ENCODE measurements at regions of chr9 and their contacts with region 1.

Region 1: DNA sequence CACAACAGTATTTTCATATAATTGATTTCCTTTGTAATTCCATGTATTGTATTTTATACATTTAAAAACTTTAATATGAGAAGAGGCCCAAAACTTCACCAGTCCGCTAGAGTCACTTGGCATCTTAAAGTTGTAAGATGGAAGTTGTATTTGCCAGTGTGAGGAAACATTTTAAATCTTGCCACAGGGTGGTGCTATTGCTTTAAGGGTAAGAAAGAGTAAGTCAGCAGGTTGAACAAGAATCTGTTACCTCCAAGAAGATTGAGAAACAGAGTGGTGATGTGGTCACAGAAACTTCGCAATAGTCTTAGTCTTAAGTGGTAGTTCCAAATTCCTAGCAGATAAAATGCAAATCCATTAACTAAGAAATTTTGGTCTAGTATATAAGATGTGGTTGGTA is 39.8 kb upstream of the RANBP6 start:
- DNase-seq: no peak
- ATAC-seq: peak in 3 of 4 donors; percentile 63 to 89 (median 74)
- H3K4me3 ChIP-seq: no peak overlapping the region
- H3K27ac ChIP-seq: no peak overlapping the region
- H3K4me1 ChIP-seq: no peaks in the 10 kb centered on the region
- H3K27me3 ChIP-seq: no peaks in the 10 kb centered on the region
- CTCF ChIP-seq: peak; percentile 33 to 64 (median 52)
- POLR2A ChIP-seq: no peak

Region 2: DNA sequence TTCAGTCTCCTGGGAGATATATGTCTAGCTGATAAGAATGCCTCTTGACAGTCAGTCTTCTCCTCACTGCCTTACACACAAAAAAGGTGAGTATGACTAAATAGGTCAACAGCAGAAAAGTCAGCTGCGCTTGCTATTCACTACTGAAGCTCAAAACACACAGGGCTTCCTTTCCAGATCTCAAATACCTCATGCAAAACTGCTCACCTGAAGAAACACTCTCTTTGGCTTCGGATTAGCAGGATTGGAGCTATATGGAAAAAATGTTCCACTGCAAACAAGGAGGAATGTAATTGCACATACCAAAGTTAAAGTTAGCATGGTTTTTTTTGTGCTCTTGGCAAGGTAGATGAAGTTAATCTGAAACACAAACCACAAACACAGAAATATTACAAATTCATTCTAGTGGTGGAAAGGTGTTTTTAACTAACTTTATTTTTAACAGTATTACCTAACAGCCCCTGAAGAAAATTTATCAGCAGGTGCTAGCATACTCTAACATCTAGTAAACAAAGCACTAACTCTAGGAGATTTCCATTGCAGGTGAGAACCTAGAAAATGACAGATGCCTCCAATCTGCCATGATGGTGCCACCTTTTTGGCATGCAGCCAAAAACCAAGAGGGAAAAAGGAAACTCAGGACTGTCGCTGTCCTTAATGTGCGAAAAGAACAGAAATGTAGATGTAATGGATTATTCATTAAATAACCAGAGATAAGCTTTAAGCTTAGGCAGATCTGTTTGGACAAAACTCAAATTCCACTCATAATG is 254.1 kb before region 1 on chr9:
- intact Hi-C with region 1: loop called in 1 of 10 experiments (anchors 10 kb)
- DNase-seq: no peak
- ATAC-seq: no peak
- H3K4me3 ChIP-seq: no peak overlapping the region
- H3K27ac ChIP-seq: no peak overlapping the region
- H3K4me1 ChIP-seq: peaks cover 0 to 6% (median 0%) of the 10 kb centered on the region in 12 donors
- H3K27me3 ChIP-seq: no peaks in the 10 kb centered on the region
- CTCF ChIP-seq: no peak
- POLR2A ChIP-seq: no peak

Region 3: DNA sequence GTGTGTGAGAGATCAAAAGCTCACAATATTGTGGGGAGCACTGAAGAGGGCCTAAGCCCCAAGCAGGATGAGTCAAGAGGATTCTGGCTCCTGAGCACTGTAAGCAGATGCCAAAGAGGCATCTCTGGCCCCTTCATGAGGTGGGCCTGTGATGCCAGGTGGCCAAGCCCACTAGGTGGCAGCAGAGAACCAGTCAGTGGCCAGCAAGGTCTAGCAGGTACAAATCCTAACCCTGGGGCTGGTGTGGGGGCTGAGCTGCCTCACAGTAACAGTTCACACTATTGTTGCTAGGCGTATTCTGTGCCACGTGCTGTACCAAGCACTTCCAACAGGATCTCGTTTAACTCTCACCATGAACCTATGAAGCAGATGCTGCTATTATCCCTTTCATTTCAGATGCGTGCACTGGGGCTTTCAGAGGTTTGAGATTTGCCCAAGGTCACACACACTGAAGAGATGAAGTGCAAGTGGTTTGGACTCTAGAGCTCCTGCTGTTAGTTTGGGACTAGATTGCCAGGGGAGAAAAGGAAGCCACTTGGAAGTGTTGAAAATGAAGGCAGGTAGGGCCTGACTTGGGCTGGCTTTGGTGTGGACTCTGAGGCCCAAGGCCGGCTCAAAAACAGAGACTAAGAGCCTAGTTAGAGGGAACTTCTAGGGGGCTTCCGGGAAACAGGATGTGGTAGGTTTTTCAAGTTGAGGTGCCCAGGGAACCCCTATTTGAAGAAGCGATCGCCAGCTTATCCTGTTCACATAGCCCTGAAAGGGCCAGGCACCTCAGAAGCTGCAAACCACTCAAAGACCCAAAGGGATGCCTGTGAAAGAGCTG is 168.9 kb before region 1 on chr9:
- intact Hi-C with region 1: loop called (anchors 1 to 5 kb)
- DNase-seq: peak; percentile 50 to 81 (median 72)
- ATAC-seq: peak; percentile 85 to 89 (median 87)
- H3K4me3 ChIP-seq: no peak overlapping the region
- H3K27ac ChIP-seq: no peak overlapping the region
- H3K4me1 ChIP-seq: no peaks in the 10 kb centered on the region
- H3K27me3 ChIP-seq: no peaks in the 10 kb centered on the region
- CTCF ChIP-seq: peak; percentile 78 to 94 (median 87)
- POLR2A ChIP-seq: no peak

Region 4: DNA sequence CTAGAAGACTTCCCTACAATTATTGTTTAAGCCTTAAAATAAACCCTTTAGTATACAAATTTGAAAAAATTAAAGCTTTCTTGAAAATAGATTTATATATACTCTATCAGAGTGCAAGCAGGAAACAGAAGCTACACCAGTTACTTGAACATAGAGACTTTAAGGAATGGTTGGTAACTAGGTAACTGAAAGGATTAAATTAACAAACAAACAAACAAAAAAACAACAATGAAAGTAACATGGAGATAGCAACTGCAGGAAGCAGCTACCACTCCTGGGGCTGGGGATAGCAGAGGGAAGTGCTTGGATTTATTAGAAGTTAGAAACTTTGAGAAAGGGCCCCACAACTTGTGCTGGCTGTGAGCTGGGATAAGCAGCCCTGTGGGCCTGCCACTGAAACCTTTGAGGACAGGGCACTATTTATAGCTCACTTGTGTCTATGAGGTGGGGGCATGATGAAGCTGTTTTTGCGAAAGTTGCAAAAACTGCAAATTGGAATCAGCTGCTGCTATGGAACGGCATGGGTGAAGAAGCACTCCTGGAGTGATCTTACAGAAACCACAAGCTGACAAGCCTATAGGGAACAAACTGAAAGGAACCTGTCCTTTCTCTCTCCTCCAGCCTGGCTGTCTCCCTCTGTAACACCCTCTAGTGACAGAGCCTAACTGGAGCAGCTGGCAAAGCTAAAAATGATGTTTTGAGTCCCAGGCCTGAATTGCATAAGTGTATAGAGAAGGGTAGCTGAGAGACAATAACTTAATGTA is 51.5 kb after region 1 on chr9:
- intact Hi-C with region 1: loop called in 2 of 10 experiments (anchors 2 to 10 kb)
- DNase-seq: peak in 4 of 5 donors; percentile 15 to 35 (median 26)
- ATAC-seq: peak; percentile 93 to 95 (median 94)
- H3K4me3 ChIP-seq: no peak overlapping the region
- H3K27ac ChIP-seq: peak overlapping the region in 11 of 12 donors; percentile 41 to 83 (median 70)
- H3K4me1 ChIP-seq: peaks cover 0 to 16% (median 9%) of the 10 kb centered on the region in 12 donors
- H3K27me3 ChIP-seq: no peaks in the 10 kb centered on the region
- CTCF ChIP-seq: peak in 11 of 12 donors; percentile 28 to 65 (median 49)
- POLR2A ChIP-seq: no peak

Region 5: GRCh38 chr9:6305954-6306563 is 250.8 kb after region 1 on chr9:
- intact Hi-C with region 1: loop called (anchors 1 to 5 kb)
- DNase-seq: no peak
- ATAC-seq: peak in 3 of 4 donors; percentile 52 to 74 (median 61)
- H3K4me3 ChIP-seq: no peak overlapping the region
- H3K27ac ChIP-seq: no peak overlapping the region
- H3K4me1 ChIP-seq: no peaks in the 10 kb centered on the region
- H3K27me3 ChIP-seq: peaks cover 0 to 4% (median 0%) of the 10 kb centered on the region in 9 donors
- CTCF ChIP-seq: peak; percentile 31 to 80 (median 66)
- POLR2A ChIP-seq: no peak

Measured in heart left ventricle (tissue), 16 donors.